Sigmoid colon (tissue), 7 donors: ENCODE measurements at regions of chr17 and their contacts with region 1.

Region 1: DNA sequence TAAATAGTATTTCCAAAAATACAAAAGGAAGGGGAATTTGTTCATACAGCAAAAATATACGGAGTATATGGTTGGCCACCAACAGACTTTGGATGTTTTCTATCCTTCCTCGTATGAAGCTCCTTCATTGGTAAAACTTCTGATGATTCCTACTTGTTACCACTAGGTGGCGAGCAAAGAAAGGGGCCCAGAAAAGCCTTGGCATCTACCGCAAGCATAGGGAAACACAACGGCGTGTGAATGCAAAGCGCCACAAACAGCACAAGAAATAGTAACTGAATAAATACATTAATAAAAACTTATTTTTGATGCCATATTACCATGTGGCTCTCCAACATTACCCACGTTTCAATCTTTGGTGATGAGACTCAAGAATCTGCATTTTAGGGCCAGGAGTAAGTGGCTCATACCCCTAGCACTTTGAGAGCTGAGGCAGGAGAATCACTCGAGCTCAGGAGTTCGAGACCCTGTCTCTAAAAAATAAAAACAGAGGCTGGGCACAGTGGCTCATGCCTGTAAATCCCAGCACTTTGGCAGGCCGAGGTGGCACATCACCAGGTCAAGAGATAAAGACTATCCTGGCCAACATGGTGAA is 34.5 kb downstream of the YWHAE start:
- DNase-seq: peak; percentile 86
- H3K4me3 ChIP-seq: peak overlapping the region in 1 of 4 donors; percentile 23
- H3K27ac ChIP-seq: peak overlapping the region; percentile 24 to 79 (median 54)
- H3K4me1 ChIP-seq: peaks cover 0 to 96% (median 78%) of the 10 kb centered on the region in 4 donors
- H3K27me3 ChIP-seq: no peaks in the 10 kb centered on the region
- CTCF ChIP-seq: peak; percentile 72 to 91 (median 78)
- EP300 ChIP-seq: no peak
- POLR2A ChIP-seq: no peak

Region 2: GRCh38 chr17:1399679-1400512 is 34.4 kb after region 1 on chr17 and contains the start of gene YWHAE:
- intact Hi-C with region 1: loop called (anchors 5 kb)
- DNase-seq: peak; percentile 99
- H3K4me3 ChIP-seq: peak within 1 kb of the TSS; percentile 77 to 91 (median 88)
- H3K27ac ChIP-seq: peak within 1 kb of the TSS; percentile 94 to 98 (median 96)
- H3K4me1 ChIP-seq: peaks cover 0 to 42% (median 39%) of the 10 kb centered on the region in 4 donors
- H3K27me3 ChIP-seq: no peaks in the 10 kb centered on the region
- CTCF ChIP-seq: no peak
- EP300 ChIP-seq: peak in 1 of 4 donors; percentile 16
- POLR2A ChIP-seq: peak; percentile 94 to 97
- total RNA-seq, gene YWHAE: 353 to 507 (median 431) TPM

Region 3: DNA sequence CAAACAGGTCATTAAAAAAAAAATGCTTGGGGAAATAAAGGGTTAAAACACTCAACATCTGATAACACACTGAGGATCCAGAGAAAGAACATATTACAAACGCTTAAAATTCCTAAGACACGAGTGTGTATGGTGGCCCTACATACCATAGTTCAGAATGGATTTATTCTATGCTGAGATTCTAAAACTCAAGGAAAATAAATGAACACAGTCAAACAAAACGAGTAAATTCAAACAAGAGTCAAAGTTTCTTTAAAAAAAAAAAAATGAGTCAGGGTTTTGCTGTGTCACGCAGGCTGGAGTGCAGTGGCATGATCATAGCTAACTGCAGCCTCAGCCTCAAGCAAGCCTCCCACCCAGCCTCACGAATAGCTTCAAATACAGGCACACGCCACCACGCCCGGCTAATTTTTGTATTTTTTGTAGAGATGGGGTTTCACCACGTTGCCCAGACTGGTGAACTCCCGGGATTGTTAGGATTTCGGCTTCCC is 73.1 kb after region 1 on chr17:
- intact Hi-C with region 1: loop called (anchors 5 kb)
- DNase-seq: no peak
- H3K4me3 ChIP-seq: peak overlapping the region in 1 of 4 donors; percentile 4
- H3K27ac ChIP-seq: peak overlapping the region; percentile 4 to 72 (median 56)
- H3K4me1 ChIP-seq: peaks cover 0 to 58% (median 47%) of the 10 kb centered on the region in 4 donors
- H3K27me3 ChIP-seq: no peaks in the 10 kb centered on the region
- CTCF ChIP-seq: no peak
- EP300 ChIP-seq: no peak
- POLR2A ChIP-seq: no peak

Region 4: DNA sequence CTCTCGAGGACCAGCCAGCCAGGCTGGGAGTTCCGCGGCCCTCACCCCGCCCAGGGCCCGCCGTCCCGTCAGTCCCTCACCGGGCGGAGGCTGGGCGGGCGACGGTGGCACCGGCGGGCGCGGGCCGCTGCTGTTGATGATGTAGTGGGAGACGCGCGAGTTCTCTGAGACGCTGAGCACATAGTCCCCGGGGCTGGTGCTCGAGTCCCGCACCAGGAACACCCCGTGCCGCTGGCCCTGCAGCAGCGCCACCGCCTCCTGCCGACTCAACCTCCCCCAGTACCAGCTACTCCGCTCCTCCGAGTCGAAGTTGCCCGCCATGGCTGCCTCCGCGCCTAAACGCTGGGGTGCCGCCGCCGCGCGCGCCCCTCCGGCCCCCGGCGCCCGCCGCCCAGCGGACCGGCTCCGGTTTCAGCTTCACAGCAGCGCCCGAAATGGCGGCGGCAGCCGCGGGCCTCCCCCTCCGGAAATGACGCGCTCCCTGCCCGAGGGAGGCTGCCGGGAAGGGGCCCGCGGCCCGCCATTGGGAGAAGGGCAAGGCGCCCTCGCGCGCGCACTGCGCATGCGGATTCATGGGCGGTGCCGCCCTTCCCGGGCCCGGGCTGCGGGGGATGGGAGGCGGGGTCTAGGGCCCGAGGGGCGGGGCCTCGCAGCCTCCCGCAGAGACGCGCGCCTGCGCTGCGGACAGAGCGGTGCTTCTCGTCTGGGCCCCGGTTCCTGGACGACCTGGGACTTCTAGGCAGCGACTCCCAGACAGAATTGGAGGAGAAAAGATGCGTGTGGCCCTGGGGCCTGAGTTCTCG is 90.5 kb after region 1 on chr17 and contains the start of gene CRK:
- intact Hi-C with region 1: loop called (anchors 2 kb)
- DNase-seq: peak; percentile 98
- H3K4me3 ChIP-seq: peak within 1 kb of the TSS; percentile 64 to 98 (median 81)
- H3K27ac ChIP-seq: peak within 1 kb of the TSS; percentile 96 to 100 (median 98)
- H3K4me1 ChIP-seq: peaks cover 0 to 62% (median 55%) of the 10 kb centered on the region in 4 donors
- H3K27me3 ChIP-seq: no peaks in the 10 kb centered on the region
- CTCF ChIP-seq: no peak
- EP300 ChIP-seq: peak in 1 of 4 donors; percentile 38
- POLR2A ChIP-seq: peak; percentile 53 to 81
- total RNA-seq, gene CRK: 61.5 to 88.7 (median 76.1) TPM

Region 5: DNA sequence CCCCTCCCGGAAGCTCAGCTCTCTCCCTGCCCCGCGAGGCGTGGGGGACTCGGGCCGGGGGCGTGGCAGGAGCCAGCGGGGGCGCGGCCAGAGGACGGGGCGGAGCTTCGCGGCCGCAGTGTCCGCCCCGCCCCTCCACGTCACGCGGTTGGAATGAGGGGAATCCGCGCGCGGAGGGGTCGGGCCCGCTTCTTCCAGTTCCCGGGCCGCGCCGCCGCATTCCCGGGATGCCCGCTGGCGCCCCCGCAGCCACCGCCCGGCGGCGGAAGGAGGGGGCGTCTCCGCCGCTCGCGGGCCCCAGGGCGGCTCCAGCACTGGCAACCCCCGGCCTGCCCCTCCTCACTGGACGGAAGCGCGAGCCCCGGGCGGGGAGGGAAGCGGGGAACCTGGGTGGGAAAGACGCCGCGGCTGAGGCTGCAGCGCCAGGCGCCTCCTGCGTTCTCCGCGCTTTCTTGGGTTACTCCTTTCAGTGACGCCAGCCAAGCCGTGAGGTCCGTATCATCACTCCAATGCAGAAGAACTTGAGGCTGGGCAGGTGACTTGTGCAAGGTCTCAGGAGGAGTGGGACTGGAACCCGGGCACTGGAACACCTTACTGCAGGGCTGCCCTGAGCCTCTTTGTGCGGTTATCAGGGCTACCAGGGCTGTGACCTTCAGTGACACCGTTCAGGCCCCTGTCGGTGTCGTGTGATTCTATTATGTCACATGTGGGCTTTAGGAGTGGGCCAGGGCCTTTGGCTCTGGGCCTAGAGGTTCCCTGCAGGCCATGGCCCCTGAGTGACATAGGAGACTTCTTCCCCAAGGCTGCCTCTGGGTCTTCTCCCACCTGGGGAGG is 122.7 kb after region 1 on chr17:
- intact Hi-C with region 1: loop called (anchors 5 kb)
- DNase-seq: peak; percentile 94
- H3K4me3 ChIP-seq: peak overlapping the region; percentile 33 to 91 (median 88)
- H3K27ac ChIP-seq: peak overlapping the region; percentile 98 to 100 (median 99)
- H3K4me1 ChIP-seq: peaks cover 0 to 84% (median 80%) of the 10 kb centered on the region in 4 donors
- H3K27me3 ChIP-seq: no peaks in the 10 kb centered on the region
- CTCF ChIP-seq: peak in 2 of 4 experiments; percentile 8 to 9
- EP300 ChIP-seq: no peak
- POLR2A ChIP-seq: no peak

Region 6: GRCh38 chr17:1516388-1517161 is 151.0 kb after region 1 on chr17 and contains the start of gene INPP5K:
- intact Hi-C with region 1: loop called (anchors 1 kb)
- DNase-seq: peak; percentile 99
- H3K4me3 ChIP-seq: peak within 1 kb of the TSS; percentile 81 to 99 (median 90)
- H3K27ac ChIP-seq: peak within 1 kb of the TSS; percentile 91 to 98 (median 94)
- H3K4me1 ChIP-seq: peaks cover 0 to 49% (median 43%) of the 10 kb centered on the region in 4 donors
- H3K27me3 ChIP-seq: no peaks in the 10 kb centered on the region
- CTCF ChIP-seq: no peak
- EP300 ChIP-seq: no peak
- POLR2A ChIP-seq: peak in 1 of 2 donors; percentile 68
- total RNA-seq, gene INPP5K: 41.0 to 66.5 (median 58.7) TPM

Region 7: GRCh38 chr17:1529863-1530262 is 164.3 kb after region 1 on chr17:
- intact Hi-C with region 1: no loop called
- DNase-seq: no peak
- H3K4me3 ChIP-seq: no peak overlapping the region
- H3K27ac ChIP-seq: no peak overlapping the region
- H3K4me1 ChIP-seq: no peaks in the 10 kb centered on the region
- H3K27me3 ChIP-seq: no peaks in the 10 kb centered on the region
- CTCF ChIP-seq: no peak
- EP300 ChIP-seq: no peak
- POLR2A ChIP-seq: no peak

Region 8: GRCh38 chr17:1606352-1607033 is 241.0 kb after region 1 on chr17:
- intact Hi-C with region 1: no loop called
- DNase-seq: no peak
- H3K4me3 ChIP-seq: no peak overlapping the region
- H3K27ac ChIP-seq: peak overlapping the region; percentile 24 to 58 (median 50)
- H3K4me1 ChIP-seq: peaks cover 0 to 14% (median 9%) of the 10 kb centered on the region in 4 donors
- H3K27me3 ChIP-seq: no peaks in the 10 kb centered on the region
- CTCF ChIP-seq: no peak
- EP300 ChIP-seq: no peak
- POLR2A ChIP-seq: no peak

Region 9: DNA sequence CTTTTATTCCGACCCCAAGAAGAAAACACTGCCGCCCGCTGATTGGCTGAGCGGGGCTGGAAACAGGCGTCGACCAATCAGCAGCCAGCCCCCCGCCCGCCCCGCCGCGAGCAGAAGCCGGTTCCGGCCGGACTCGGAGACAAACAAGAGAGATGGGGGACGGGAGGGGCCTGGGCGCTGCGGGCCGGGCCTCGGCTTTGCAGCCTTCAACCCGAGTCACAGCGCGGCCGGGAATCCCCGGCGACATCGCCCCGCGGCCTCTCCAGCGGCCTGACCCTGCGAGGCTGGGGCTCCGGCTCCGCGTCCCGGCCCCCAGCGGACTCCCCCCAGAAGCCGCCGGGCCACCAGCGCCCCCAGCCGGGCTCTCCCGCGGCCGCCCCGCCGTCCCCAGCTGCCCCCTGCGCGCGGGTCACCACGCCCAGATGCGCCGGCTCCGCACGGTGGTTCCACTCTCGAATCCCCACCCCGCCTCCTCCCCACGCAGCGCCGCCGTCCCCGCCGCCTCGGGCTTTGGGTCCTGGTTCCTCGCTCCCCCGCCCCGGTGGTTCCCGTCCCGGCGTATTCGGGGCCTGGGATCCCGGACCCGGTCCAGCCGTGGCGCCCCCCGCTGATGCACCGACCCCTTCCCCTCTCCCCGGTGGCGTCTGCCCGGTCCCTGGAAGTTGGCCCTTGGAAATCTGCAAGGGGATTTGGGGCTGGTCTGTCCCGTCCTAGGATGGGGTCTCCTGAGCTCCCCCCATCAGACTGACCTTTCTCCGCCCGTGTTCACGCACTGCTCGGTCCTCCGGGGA is 263.5 kb after region 1 on chr17:
- intact Hi-C with region 1: loop called (anchors 10 kb)
- DNase-seq: peak; percentile 97
- H3K4me3 ChIP-seq: peak overlapping the region; percentile 57 to 74 (median 66)
- H3K27ac ChIP-seq: peak overlapping the region; percentile 86 to 97 (median 94)
- H3K4me1 ChIP-seq: peaks cover 0 to 30% (median 20%) of the 10 kb centered on the region in 4 donors
- H3K27me3 ChIP-seq: no peaks in the 10 kb centered on the region
- CTCF ChIP-seq: peak in 1 of 4 experiments; percentile 50
- EP300 ChIP-seq: peak in 1 of 4 donors; percentile 18
- POLR2A ChIP-seq: peak in 1 of 2 donors; percentile 43